Activated B cell treated with CpG ODN at 0.5 μM for 24 hours (primary cell): ENCODE measurements at regions of chr19 and their contacts with region 1.

Region 1: DNA sequence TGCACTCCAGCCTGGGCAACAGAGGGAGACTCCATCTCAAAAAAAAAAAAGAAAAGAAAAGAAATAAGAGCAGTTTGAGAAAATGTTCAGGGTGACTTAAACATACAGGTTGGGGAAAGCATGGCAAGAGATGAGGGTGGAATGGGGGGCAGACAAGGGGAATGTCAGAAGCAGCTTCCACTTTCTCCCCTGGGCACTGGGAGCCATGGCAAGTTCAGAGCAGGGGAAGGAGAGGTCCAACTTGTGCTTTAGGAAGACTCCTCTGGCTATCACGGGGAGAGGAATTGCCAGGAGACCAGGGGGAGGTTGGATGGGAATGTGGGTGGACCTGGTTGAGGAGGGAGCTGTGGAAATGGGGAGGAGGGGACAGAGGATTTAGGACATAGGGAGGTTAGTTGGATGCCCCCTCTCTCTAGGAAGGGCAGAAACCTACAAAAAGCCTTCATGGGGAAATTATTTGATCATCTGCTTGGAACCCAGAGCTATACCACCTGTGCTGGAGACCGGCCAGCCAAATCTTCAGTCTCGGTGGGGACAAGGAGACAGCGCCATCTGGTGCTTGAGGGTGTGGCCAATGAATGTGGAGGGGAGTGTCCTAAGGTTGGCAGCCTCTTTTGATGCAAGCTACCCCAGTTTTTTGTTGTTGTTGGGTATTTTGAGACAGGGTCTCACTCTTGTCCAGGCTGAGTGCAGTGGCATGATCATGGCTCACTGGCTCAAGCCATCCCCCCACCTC is 7.3 kb upstream of the STRN4 start:
- DNase-seq: peak; percentile 48
- ATAC-seq: peak; percentile 87
- H3K4me3 Mint-ChIP-seq: no peak overlapping the region
- H3K27ac Mint-ChIP-seq: no peak overlapping the region
- H3K4me1 Mint-ChIP-seq: peaks cover 24% of the 10 kb centered on the region
- H3K27me3 Mint-ChIP-seq: no peaks in the 10 kb centered on the region
- CTCF ChIP-seq: no peak

Region 2: DNA sequence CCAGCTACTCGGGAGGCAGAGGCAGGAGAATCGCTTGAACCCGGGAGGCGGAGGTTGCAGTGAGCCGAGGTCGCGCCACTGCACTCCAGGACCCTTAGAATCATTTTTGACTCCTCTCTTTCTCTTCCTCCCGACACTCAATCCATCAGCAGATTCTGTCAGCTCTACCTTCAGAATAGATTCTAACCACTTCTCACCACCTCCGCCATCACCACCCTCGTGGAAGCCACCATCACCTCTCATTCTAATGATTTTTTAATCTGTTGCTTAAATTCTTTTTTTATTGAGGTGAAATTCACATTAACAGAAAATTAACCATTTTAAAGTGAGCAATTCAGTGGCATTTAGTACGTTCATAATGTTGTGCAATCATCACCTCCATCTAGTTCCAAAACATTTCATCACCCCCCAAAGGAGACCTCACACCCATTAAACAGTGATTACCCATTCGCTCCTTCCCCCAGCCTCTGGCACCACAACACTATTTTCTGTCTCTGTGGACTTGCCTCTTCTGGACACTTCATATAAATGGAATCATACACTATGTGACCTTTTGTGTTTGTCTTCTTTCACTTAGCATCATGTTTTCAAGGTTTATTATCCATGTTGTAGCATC is 763.4 kb before region 1 on chr19:
- CTCF ChIA-PET with region 1: no interaction called
- POLR2A ChIA-PET with region 1: no interaction called
- intact Hi-C with region 1: no loop called
- DNase-seq: no peak
- ATAC-seq: no peak
- H3K4me3 Mint-ChIP-seq: no peak overlapping the region
- H3K27ac Mint-ChIP-seq: no peak overlapping the region
- H3K4me1 Mint-ChIP-seq: no peaks in the 10 kb centered on the region
- H3K27me3 Mint-ChIP-seq: peaks cover 24% of the 10 kb centered on the region
- CTCF ChIP-seq: no peak

Region 3: GRCh38 chr19:46529622-46530462 is 223.7 kb before region 1 on chr19:
- CTCF ChIA-PET with region 1: interaction called, 15 read pairs
- POLR2A ChIA-PET with region 1: interaction called, 3 read pairs
- intact Hi-C with region 1: loop called (anchors 1 kb)
- DNase-seq: peak; percentile 63
- ATAC-seq: peak; percentile 72
- H3K4me3 Mint-ChIP-seq: no peak overlapping the region
- H3K27ac Mint-ChIP-seq: no peak overlapping the region
- H3K4me1 Mint-ChIP-seq: peaks cover 10% of the 10 kb centered on the region
- H3K27me3 Mint-ChIP-seq: peaks cover 9% of the 10 kb centered on the region
- CTCF ChIP-seq: peak; percentile 84

Region 4: GRCh38 chr19:46704379-46705076 is 49.1 kb before region 1 on chr19:
- CTCF ChIA-PET with region 1: interaction called, 14 read pairs
- POLR2A ChIA-PET with region 1: no interaction called
- intact Hi-C with region 1: loop called (anchors 1 kb)
- DNase-seq: peak; percentile 86
- ATAC-seq: peak; percentile 95
- H3K4me3 Mint-ChIP-seq: no peak overlapping the region
- H3K27ac Mint-ChIP-seq: peak overlapping the region; percentile 18
- H3K4me1 Mint-ChIP-seq: peaks cover 6% of the 10 kb centered on the region
- H3K27me3 Mint-ChIP-seq: no peaks in the 10 kb centered on the region
- CTCF ChIP-seq: peak; percentile 71

Region 5: DNA sequence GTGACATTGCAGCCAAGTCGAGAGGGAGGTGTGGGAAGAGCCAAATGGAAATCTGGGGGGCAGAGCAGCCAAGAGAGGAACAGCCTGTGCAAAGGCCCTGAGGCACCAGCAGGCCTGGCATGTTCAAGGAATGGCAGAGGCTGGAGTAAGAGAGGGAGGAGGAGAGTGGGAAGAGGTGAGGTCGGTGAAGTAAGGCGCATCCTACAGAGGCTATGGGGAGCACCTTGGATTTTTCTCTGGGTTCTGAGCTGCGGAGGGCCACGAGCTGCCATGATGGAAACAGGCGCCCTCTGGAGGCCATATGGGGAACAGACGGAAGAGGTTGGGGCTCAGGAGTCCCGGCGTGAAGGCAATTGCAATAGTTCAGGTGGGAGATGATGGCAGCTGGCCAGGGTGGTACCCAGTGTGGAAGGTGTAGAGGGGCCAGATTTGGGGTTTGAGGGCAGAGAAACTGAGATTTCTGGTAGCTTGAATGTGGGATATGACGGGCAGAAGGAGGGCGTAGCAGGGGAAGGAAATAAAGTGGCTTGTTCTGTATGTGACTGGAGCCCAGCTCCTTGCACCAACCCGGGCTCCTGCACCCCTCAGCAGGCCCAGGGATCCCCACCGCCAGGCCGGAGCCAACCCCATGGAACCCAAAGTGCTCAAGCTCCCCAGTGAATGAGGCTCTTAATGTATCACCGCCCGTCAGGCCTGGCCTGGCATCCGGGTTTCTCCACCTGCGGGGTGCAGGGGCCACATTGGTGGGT is 13.2 kb after region 1 on chr19:
- CTCF ChIA-PET with region 1: interaction called, 15 read pairs
- POLR2A ChIA-PET with region 1: no interaction called
- intact Hi-C with region 1: no loop called
- DNase-seq: peak; percentile 44
- ATAC-seq: peak; percentile 78
- H3K4me3 Mint-ChIP-seq: no peak overlapping the region
- H3K27ac Mint-ChIP-seq: no peak overlapping the region
- H3K4me1 Mint-ChIP-seq: peaks cover 3% of the 10 kb centered on the region
- H3K27me3 Mint-ChIP-seq: no peaks in the 10 kb centered on the region
- CTCF ChIP-seq: no peak

Region 6: DNA sequence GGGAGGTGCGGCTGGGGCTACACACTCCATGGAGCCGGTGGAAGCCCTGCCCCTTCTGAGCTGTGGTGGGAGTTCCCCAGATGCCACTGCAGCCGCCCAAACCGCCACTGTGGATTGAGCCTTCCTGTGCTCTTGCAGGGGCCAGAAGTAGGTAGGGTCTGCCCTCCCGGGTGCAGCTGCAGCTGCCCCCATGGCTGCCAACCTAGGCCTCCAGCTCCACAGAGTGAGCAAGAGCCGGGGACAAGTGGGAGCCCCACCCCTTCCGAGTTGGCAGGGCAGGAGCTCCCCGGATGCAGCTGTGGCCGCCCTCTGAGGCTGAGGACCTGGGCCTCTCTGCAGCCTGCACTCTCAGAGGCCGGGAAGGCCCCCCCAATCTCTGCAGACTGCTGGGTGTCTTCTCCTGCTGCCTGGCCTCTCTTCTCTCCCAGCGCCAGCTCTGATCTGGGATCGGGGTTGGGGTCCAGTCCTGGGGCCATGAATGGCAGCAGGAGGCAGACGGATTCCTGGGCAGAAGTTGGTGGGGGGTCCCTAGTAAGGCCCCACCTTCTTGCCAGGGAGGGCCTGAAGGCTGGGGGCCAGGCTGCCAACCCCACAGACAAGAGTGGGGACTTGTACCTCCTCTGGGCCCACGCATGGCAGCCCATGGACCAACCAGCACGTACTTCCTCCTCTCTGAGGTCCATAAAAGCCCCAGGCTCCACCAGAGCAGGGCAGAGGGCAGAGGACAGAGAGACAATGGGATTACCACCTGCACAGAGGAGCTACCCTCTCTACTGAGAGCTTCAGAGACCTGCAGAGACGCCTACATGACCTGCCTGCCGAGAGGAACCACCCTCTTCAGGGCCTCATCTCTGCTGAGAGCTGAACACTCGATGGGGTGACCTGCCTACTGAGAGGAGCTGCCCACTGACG is 68.2 kb after region 1 on chr19:
- CTCF ChIA-PET with region 1: interaction called, 8 read pairs
- POLR2A ChIA-PET with region 1: interaction called, 3 read pairs
- intact Hi-C with region 1: loop called (anchors 1 kb)
- DNase-seq: peak; percentile 54
- ATAC-seq: peak; percentile 71
- H3K4me3 Mint-ChIP-seq: peak overlapping the region; percentile 48
- H3K27ac Mint-ChIP-seq: peak overlapping the region; percentile 90
- H3K4me1 Mint-ChIP-seq: peaks cover 61% of the 10 kb centered on the region
- H3K27me3 Mint-ChIP-seq: no peaks in the 10 kb centered on the region
- CTCF ChIP-seq: no peak